ENCODE measurements at regions of chr22 and their contacts with region 1.

Region 1: DNA sequence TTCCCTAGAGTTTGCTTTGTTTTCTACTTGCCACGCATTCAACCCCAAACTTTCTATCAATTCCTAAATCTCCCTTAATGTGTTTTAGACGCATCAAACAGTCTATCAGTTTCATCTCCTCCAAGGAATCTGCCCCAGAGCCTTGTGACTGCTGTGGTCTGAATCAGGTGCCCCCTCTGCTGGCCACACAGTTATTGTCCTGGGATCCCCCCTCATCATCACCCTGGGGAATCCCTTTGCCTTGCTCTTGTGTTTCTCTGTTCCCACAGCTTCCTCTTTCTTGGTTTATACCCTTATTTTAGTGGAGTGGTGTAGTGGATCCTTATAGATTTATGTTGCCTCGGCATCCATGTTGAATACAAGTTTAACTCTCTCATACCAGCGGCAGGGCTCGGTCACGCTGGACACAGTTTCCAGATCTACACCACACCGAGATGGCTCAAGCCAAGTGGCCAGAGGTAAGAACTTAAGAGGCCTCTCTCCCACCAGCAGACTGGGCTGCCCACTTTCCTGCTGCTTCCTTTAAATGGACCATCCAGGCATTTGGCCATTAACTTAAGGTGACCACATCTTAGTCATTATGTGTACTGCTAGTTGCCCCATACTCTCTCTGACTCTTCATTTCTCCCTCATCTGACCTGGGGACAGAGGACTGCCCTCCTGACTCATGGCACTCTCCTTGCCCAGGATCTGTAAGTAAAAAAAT is 8.2 kb downstream of the UPB1 start:
- DNase-seq: peak in 1 of 2 donors; percentile 59
- H3K4me3 ChIP-seq: no peak overlapping the region
- H3K27ac ChIP-seq: no peak overlapping the region
- H3K4me1 ChIP-seq: no peaks in the 10 kb centered on the region
- H3K27me3 ChIP-seq: no peaks in the 10 kb centered on the region
- CTCF ChIP-seq: peak; percentile 56 to 59

Region 2: GRCh38 chr22:24325105-24325757 is 178.1 kb before region 1 on chr22:
- intact Hi-C with region 1: loop called (anchors 10 kb)
- DNase-seq: no peak
- H3K4me3 ChIP-seq: no peak overlapping the region
- H3K27ac ChIP-seq: peak overlapping the region in 1 of 2 donors; percentile 3
- H3K4me1 ChIP-seq: peaks cover 0 to 24% (median 8%) of the 10 kb centered on the region in 4 donors
- H3K27me3 ChIP-seq: no peaks in the 10 kb centered on the region
- CTCF ChIP-seq: peak; percentile 62 to 63

Region 3: GRCh38 chr22:24355574-24355973 is 147.7 kb before region 1 on chr22:
- intact Hi-C with region 1: no loop called
- DNase-seq: no peak
- H3K4me3 ChIP-seq: no peak overlapping the region
- H3K27ac ChIP-seq: no peak overlapping the region
- H3K4me1 ChIP-seq: peaks cover 0 to 8% (median 0%) of the 10 kb centered on the region in 4 donors
- H3K27me3 ChIP-seq: no peaks in the 10 kb centered on the region
- CTCF ChIP-seq: no peak

Measured in tibial artery (tissue), 4 donors.